GM18951 (cell line): ENCODE measurements at regions of chr22 and their contacts with region 1.

Region 1: GRCh38 chr22:17119481-17120202 is 1.5 kb downstream of the TMEM121B start:
- POLR2A ChIP-seq: no peak

Region 2: GRCh38 chr22:16651217-16651616 is 468.4 kb before region 1 on chr22:
- in situ Hi-C with region 1: no loop called
- POLR2A ChIP-seq: no peak

Region 3: GRCh38 chr22:17152340-17152739 is 32.7 kb after region 1 on chr22:
- in situ Hi-C with region 1: loop called (anchors 5 kb)
- POLR2A ChIP-seq: no peak

Region 4: DNA sequence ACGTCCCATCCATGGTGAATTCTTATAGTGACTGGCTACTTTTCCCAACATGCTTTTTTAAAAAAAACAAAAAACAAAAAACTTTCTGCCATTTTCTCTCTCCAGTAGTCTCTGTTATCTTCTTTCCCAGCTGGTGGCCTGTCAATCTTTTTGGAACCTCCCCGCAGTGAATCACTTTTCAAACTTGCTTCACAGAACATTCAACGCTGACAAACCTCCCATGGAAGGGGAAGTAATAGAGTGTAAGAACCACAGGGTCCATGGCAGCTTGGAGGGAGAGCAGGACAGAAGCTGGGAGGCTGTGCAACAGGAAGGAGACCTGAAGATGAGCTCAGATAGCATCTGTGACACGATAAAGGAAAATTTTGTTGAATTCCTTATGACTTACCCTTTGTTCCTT is 239.9 kb after region 1 on chr22:
- in situ Hi-C with region 1: no loop called
- POLR2A ChIP-seq: no peak